Dendritic cell treated with granulocyte-macrophage colony-stimulating factor and Interleukin-4, amounts not matched to agents 40 ng/mL and 50 ng/mL, for 4 days (primary cell): ENCODE measurements at regions of chr4 and their contacts with region 1.

Region 1: DNA sequence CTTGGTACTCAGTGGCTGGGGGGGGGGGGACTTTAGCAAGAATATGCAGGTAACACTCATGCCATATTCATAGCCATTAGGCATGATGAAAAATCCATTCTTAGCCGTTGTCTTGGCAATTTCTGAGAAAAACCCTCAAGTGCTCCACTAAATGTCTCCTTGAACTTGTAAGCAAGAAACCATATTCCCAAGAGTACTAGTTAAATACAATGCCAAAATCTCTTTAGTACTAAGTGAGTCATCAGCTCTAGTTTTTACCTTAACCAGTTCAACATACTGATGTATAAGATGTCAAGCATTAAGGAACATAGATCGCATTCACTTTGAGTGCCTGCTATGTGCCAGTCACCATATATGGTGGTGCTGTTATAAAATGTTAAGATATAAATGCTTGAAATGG is 27.5 kb downstream of the UBE2D3 start:
- H3K4me3 Mint-ChIP-seq: no peak overlapping the region
- H3K27ac Mint-ChIP-seq: no peak overlapping the region
- H3K4me1 Mint-ChIP-seq: peaks cover 13% of the 10 kb centered on the region
- H3K27me3 Mint-ChIP-seq: no peaks in the 10 kb centered on the region

Region 2: DNA sequence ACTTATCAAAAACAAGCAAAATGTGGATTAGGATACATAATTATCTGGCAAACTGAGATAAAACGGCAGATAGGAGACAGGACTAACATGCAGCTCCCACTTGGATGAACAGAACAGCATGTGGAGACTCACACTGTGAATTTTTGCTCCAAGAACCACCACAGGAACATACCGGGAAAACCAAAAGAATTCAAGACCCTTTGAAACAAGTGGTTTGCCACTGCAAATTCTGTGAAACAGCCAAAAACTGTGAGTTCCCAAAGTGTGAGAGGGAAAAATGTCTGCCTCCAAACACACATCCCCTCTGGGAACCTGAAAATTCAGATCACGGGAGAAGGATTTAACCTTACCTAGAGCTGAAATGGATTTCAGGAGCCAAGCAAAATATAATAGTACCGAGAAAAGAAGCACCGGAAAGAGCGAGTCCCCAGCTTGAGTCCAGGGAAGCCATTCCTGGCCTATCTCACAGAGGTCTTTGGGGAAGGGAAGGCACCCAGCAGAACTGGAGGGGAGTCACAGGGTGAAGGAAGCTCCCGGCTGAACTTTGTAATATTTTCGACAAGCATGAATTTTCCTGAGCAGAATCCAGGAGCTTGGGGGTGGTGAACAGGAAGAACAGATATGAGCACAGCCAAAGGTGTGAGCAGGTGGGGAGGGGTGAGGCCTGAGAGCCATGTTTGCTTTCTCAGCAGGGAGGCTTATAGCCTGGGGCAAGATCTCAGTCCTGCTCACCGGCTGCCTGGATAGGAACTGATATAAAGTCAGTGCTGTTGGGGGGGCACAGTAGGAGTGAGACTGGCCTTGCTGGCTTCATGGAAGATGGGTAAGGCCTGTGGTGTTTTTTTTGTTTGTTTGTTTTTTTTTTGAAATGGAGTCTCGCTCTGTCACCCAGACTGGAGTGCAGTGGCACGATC is 62.9 kb before region 1 on chr4:
- intact Hi-C with region 1: loop called (anchors 5 kb)
- H3K4me3 Mint-ChIP-seq: no peak overlapping the region
- H3K27ac Mint-ChIP-seq: peak overlapping the region; percentile 53
- H3K4me1 Mint-ChIP-seq: peaks cover 65% of the 10 kb centered on the region
- H3K27me3 Mint-ChIP-seq: no peaks in the 10 kb centered on the region

Region 3: DNA sequence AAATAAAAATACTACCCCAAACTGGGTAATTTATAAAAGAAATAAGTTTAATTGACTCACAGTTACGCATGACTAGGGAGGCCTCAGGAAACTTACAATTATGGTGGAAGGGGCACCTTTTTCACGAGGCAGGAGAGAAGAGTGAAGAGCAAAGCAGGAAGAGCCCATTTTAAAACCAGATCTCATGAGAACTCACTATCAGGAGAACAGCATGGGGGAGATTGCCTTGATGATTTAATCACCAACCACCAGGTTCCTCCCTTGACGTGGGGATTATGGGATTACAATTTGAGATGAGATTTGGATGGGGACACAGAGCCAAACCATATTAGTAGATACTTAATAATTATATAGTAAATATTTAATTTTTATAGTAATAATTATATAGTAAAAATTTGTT is 79.1 kb after region 1 on chr4:
- intact Hi-C with region 1: no loop called
- H3K4me3 Mint-ChIP-seq: no peak overlapping the region
- H3K27ac Mint-ChIP-seq: no peak overlapping the region
- H3K4me1 Mint-ChIP-seq: peaks cover 20% of the 10 kb centered on the region
- H3K27me3 Mint-ChIP-seq: no peaks in the 10 kb centered on the region

Region 4: DNA sequence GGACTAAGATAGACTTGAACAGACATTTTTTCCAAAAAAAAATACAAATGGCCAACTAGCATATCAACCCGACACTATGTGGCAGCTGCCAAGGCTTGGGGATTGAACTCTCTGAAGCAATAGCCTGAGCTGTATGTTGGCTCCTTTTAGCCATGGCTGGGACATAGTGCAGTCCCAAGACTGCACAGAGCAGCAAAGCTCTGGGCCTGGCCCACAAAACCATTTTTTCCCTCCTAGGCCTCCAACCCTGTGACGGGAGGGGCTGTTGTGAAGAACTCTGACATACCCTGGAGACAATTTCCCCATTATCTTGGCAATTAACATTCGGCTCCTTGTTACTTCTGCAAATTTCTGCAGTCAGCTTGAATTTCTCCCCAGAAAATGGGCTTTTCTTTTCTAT is 119.0 kb after region 1 on chr4:
- intact Hi-C with region 1: no loop called
- H3K4me3 Mint-ChIP-seq: no peak overlapping the region
- H3K27ac Mint-ChIP-seq: no peak overlapping the region
- H3K4me1 Mint-ChIP-seq: no peaks in the 10 kb centered on the region
- H3K27me3 Mint-ChIP-seq: no peaks in the 10 kb centered on the region

Region 5: DNA sequence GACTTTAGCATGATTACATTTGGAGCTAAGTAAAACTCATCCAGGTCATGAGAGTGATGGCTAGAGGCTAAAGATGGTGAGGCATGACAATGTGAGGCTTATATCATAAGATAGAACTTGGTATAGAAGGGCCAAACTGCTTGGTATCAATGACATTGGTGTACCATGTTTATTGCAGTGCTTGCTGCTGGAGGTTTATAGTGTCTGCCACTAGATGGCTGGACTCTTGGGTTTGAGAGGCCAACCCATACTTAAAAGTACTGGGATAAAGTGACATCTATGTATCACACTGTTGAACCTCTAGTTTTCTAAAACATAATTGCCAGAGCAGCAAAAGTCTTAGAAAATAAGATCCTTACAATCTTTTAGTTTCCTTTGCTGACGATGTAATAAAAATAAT is 1003.0 kb after region 1 on chr4:
- intact Hi-C with region 1: no loop called
- H3K4me3 Mint-ChIP-seq: no peak overlapping the region
- H3K27ac Mint-ChIP-seq: no peak overlapping the region
- H3K4me1 Mint-ChIP-seq: no peaks in the 10 kb centered on the region
- H3K27me3 Mint-ChIP-seq: no peaks in the 10 kb centered on the region